Ovary (tissue), 10 donors: ENCODE measurements at regions of chr12 and their contacts with region 1.

Region 1: GRCh38 chr12:92987362-92987761 is 58.3 kb upstream of the EEA1 start:
- DNase-seq: peak in 1 of 5 donors; percentile 50
- H3K4me3 ChIP-seq: no peak overlapping the region
- H3K27ac ChIP-seq: peak overlapping the region in 1 of 2 donors; percentile 35
- H3K4me1 ChIP-seq: peaks cover 4% of the 10 kb centered on the region
- H3K27me3 ChIP-seq: no peaks in the 10 kb centered on the region
- CTCF ChIP-seq: peak in 2 of 3 donors; percentile 72 to 83
- EP300 ChIP-seq: no peak
- POLR2A ChIP-seq: no peak

Region 2: GRCh38 chr12:93261505-93262094 is 274.2 kb after region 1 on chr12:
- intact Hi-C with region 1: no loop called
- DNase-seq: no peak
- H3K4me3 ChIP-seq: no peak overlapping the region
- H3K27ac ChIP-seq: no peak overlapping the region
- H3K4me1 ChIP-seq: no peaks in the 10 kb centered on the region
- H3K27me3 ChIP-seq: no peaks in the 10 kb centered on the region
- CTCF ChIP-seq: no peak
- EP300 ChIP-seq: no peak
- POLR2A ChIP-seq: no peak

Region 3: DNA sequence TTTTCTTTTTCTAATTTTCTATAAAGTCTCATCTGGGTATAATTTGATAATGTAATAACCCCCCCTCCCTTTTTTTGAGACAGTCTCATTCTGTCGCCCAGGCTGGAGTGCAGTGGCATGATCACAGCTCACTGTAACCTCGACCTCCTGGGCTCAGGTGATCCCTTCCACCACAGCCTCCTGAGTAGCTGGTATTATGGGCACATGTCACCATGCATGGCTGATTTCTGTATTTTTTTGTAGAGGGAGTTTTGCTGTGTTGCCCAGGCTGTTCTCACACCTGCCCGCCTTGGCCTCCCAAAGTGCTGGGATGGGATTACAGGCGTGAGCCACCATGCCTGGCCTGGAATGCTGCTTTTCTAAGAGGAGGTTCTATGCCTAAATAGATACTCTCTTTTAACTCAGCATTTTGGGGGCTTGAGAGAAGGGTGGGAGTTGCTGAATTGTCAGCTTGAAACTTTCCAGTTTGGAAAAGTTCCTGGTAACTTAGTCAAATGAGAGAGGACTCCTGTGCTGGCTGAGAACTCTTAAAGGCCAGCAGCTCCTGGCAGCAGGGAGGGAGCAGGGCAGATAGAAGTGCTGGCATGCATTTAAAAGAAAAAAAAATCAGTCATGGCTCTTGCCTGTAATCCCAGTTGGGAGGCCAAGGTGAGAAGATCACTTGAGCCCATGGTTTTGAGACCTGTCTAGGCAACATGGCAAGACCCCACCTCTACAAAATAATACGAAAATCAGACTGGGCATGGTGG is 403.4 kb after region 1 on chr12:
- intact Hi-C with region 1: loop called in 3 of 4 experiments (anchors 5 to 10 kb)
- DNase-seq: no peak
- H3K4me3 ChIP-seq: no peak overlapping the region
- H3K27ac ChIP-seq: no peak overlapping the region
- H3K4me1 ChIP-seq: peaks cover 18% of the 10 kb centered on the region
- H3K27me3 ChIP-seq: no peaks in the 10 kb centered on the region
- CTCF ChIP-seq: no peak
- EP300 ChIP-seq: no peak
- POLR2A ChIP-seq: no peak

Region 4: DNA sequence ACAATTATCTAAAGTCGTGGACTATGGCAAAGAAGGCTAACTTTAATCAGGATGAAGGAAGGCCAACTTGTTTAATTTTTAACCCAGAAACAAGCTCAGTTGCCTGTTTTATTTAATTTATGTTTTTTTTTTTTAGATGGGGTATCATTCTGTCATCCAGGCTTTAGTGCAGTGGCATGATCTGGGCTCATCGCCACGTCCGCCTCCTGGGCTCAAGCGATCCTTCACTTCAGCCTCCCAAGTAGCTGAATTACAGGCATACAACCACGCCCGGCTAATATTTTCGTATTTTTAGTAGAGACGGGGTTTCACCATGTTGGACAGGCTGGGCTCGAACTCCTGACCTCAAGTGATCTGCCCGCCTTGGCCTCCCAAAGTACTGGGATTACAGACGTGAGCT is 410.1 kb after region 1 on chr12:
- intact Hi-C with region 1: loop called in 3 of 4 experiments (anchors 5 to 10 kb)
- DNase-seq: no peak
- H3K4me3 ChIP-seq: no peak overlapping the region
- H3K27ac ChIP-seq: no peak overlapping the region
- H3K4me1 ChIP-seq: peaks cover 3% of the 10 kb centered on the region
- H3K27me3 ChIP-seq: no peaks in the 10 kb centered on the region
- CTCF ChIP-seq: no peak
- EP300 ChIP-seq: no peak
- POLR2A ChIP-seq: no peak

Region 5: DNA sequence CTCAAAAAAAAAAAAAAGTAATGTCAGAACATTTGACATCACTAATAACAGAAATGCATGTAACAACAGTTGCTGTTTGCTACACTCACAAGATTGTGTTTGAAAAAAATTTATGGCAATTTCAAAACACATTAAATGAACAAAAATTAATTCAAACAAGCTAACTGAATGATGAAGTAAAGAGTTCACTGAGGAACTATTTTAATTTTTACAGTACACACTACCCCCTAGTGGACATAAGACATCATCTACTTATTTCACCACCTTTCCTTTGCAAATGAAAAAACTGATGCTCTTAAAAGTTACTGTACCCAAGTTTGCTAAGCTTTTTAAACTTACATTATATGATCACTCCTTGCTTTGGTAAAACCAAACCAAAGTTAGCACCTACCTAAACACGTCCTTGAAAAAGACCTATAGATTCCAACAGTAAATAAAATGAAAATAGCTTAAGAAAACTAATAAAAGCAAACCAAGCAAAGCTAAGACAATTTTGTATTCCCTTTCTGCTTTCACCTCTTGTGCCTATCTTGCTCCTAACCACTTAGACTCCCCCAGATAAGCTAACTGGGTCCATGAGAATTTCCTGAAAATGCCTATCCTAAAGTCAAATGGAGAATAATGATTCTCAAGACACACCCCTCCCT is 432.1 kb after region 1 on chr12:
- intact Hi-C with region 1: loop called in 2 of 4 experiments (anchors 5 to 10 kb)
- DNase-seq: no peak
- H3K4me3 ChIP-seq: no peak overlapping the region
- H3K27ac ChIP-seq: no peak overlapping the region
- H3K4me1 ChIP-seq: peaks cover 10% of the 10 kb centered on the region
- H3K27me3 ChIP-seq: no peaks in the 10 kb centered on the region
- CTCF ChIP-seq: peak in 2 of 3 donors; percentile 48 to 71
- EP300 ChIP-seq: no peak
- POLR2A ChIP-seq: no peak